Activated CD4-positive, alpha-beta T cell treated with anti-CD3 and anti-CD28 coated beads, Interleukin-2, amount 10 ng/mL, durations not matched to agents 7 days and 5 days (primary cell): ENCODE measurements at regions of chr19 and their contacts with region 1.

Region 1: GRCh38 chr19:18304458-18305310 is 18.2 kb downstream of the LSM4 start:
- DNase-seq: peak; percentile 81
- H3K4me3 Mint-ChIP-seq: peak overlapping the region; percentile 98
- H3K27ac Mint-ChIP-seq: peak overlapping the region; percentile 93
- H3K4me1 Mint-ChIP-seq: peaks cover 45% of the 10 kb centered on the region
- H3K27me3 Mint-ChIP-seq: no peaks in the 10 kb centered on the region

Region 2: GRCh38 chr19:18291590-18292461 is 12.9 kb before region 1 on chr19:
- CTCF ChIA-PET with region 1: interaction called, 10 read pairs
- POLR2A ChIA-PET with region 1: interaction called, 9 read pairs
- DNase-seq: peak; percentile 84
- H3K4me3 Mint-ChIP-seq: peak overlapping the region; percentile 93
- H3K27ac Mint-ChIP-seq: peak overlapping the region; percentile 96
- H3K4me1 Mint-ChIP-seq: peaks cover 76% of the 10 kb centered on the region
- H3K27me3 Mint-ChIP-seq: no peaks in the 10 kb centered on the region

Region 3: DNA sequence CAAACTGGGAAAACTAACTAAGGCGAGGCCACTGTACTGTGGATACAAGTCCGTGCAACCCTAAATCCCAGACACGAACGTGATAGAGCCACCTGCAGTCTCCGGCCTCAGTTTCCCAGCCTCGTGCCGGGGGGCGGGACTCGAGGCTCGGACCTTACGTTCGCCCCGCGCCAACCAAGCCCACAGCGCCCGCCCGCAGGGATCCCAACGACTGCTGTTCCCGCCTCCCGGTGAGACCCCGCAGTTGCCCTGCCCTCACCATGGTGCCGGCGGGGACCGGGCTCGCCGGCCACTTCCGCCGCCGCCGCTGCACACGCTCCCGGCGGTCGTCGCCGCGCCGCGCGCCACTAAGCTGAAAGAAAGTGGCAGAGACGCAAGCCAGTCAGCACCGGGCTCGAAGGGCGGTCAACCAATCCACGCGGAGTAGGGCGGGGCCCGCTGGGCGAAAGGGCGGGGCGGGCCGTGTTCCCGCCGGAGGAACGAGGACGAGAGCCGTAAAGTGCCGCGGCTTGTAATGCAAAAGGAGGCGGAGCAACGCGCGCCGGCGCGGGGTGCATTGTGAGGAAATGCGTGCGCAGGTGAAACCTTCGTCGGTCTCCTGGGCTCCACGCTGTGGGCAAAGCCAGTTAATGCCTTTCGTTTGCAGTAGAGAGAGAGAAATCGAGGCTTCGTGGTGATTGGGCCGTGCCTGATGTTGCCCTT is 18.2 kb after region 1 on chr19 and contains the start of gene LSM4:
- CTCF ChIA-PET with region 1: interaction called, 29 read pairs
- POLR2A ChIA-PET with region 1: interaction called, 11 read pairs
- DNase-seq: peak; percentile 100
- H3K4me3 Mint-ChIP-seq: peak within 1 kb of the TSS; percentile 93
- H3K27ac Mint-ChIP-seq: peak within 1 kb of the TSS; percentile 97
- H3K4me1 Mint-ChIP-seq: peaks cover 56% of the 10 kb centered on the region
- H3K27me3 Mint-ChIP-seq: no peaks in the 10 kb centered on the region
- total RNA-seq, gene LSM4: 156 to 181 TPM